Endothelial cell of umbilical vein (primary cell): ENCODE measurements at regions of chr22 and their contacts with region 1.

Region 1: DNA sequence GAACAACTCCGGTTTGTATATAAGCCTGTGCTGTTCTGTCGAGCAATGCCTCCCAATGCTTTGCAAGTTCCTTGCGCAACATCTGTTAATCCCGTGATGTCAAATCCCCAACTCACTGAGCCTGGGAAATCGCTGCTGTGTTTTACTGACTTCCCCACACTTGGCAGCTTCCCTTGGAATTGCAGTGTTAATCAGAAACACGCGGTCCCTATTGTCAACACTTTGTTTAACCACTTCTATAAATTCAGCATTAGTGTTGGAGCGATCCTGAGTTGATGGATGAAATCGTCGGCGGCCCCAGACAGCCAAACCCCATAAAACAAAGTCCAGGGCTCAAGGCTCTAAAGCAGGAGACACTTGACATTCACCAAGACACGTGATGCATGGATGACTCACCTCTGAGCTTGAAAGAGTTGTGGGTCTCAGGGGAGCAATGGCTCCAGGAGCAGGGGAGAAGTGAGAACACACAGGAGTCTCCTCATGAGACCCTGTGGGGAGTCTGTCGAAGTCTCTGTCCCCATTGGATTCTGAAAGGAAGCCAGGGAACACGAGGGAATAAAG is 555.3 kb downstream of the MIAT start:
- DNase-seq: peak; percentile 96
- H3K4me3 ChIP-seq: no peak overlapping the region
- H3K27ac ChIP-seq: peak overlapping the region; percentile 71
- H3K4me1 ChIP-seq: peaks cover 21% of the 10 kb centered on the region
- H3K27me3 ChIP-seq: no peaks in the 10 kb centered on the region
- CTCF ChIP-seq: no peak
- POLR2A ChIP-seq: no peak

Region 2: GRCh38 chr22:27134315-27134701 is 78.4 kb before region 1 on chr22:
- CTCF ChIA-PET with region 1: no interaction called
- POLR2A ChIA-PET with region 1: no interaction called
- dilution Hi-C with region 1: no loop called
- intact Hi-C with region 1: loop called (anchors 2 kb)
- DNase-seq: peak; percentile 60
- H3K4me3 ChIP-seq: no peak overlapping the region
- H3K27ac ChIP-seq: peak overlapping the region; percentile 52
- H3K4me1 ChIP-seq: peaks cover 30% of the 10 kb centered on the region
- H3K27me3 ChIP-seq: no peaks in the 10 kb centered on the region
- CTCF ChIP-seq: no peak
- POLR2A ChIP-seq: no peak

Region 3: GRCh38 chr22:27173530-27173929 is 39.2 kb before region 1 on chr22:
- CTCF ChIA-PET with region 1: no interaction called
- POLR2A ChIA-PET with region 1: interaction called, 3 read pairs
- dilution Hi-C with region 1: no loop called
- intact Hi-C with region 1: loop called (anchors 1 kb)
- DNase-seq: peak; percentile 79
- H3K4me3 ChIP-seq: no peak overlapping the region
- H3K27ac ChIP-seq: peak overlapping the region; percentile 76
- H3K4me1 ChIP-seq: peaks cover 18% of the 10 kb centered on the region
- H3K27me3 ChIP-seq: no peaks in the 10 kb centered on the region
- CTCF ChIP-seq: no peak
- POLR2A ChIP-seq: no peak

Region 4: DNA sequence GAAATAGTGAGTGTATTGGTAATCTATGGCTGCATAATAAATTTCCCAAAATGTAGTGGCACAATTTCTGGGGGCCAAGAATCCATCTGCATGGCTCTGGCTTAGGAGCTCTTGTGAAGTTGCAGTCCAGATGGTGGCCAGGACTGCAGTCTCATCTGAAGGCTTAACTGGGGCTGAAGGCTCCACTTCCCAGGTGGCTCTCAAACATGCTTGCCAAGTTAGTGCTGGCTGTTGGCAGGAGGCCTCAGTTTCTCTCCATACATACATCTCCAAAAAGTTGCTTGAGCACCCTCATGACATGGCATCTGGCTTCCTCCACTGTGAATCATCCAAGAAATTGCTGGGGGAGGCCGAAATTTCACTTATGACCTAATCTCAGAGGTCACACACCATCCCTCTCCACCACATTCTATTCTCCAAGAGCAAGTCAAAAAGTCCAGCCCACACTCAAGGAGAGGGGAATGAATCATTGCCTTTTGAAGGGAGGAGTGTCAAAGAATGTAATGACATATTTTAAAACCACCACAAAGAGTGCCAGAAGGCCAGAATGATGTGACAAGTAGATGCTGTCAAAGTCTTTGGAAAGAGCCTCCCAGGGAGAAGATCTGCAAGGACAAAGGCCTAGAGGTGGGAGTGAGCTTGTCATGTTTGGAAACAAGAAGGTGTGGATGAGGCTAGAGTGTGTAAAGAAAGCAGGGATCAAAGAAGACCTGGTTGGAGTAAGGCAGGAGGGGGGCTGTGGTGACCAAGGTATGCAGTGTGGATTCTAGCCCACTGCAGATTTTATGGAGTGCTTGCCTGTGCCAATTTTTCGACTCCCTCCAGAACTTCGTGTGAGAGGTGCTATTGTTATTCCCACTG is 10.8 kb after region 1 on chr22:
- CTCF ChIA-PET with region 1: no interaction called
- POLR2A ChIA-PET with region 1: no interaction called
- dilution Hi-C with region 1: no loop called
- intact Hi-C with region 1: loop called (anchors 1 kb)
- DNase-seq: no peak
- H3K4me3 ChIP-seq: no peak overlapping the region
- H3K27ac ChIP-seq: no peak overlapping the region
- H3K4me1 ChIP-seq: peaks cover 13% of the 10 kb centered on the region
- H3K27me3 ChIP-seq: no peaks in the 10 kb centered on the region
- CTCF ChIP-seq: no peak
- POLR2A ChIP-seq: no peak